Esophagus muscularis mucosa (tissue), 4 donors: ENCODE measurements at regions of chr3 and their contacts with region 1.

Region 1: GRCh38 chr3:112013058-112013783 is 14.5 kb downstream of the TAGLN3 start:
- DNase-seq: peak; percentile 90
- H3K4me3 ChIP-seq: peak overlapping the region in 3 of 4 donors; percentile 8 to 21 (median 10)
- H3K27ac ChIP-seq: no peak overlapping the region
- H3K4me1 ChIP-seq: peaks cover 7 to 21% (median 16%) of the 10 kb centered on the region in 4 donors
- H3K27me3 ChIP-seq: no peaks in the 10 kb centered on the region
- CTCF ChIP-seq: peak; percentile 69 to 79 (median 74)
- EP300 ChIP-seq: no peak
- POLR2A ChIP-seq: no peak

Region 2: DNA sequence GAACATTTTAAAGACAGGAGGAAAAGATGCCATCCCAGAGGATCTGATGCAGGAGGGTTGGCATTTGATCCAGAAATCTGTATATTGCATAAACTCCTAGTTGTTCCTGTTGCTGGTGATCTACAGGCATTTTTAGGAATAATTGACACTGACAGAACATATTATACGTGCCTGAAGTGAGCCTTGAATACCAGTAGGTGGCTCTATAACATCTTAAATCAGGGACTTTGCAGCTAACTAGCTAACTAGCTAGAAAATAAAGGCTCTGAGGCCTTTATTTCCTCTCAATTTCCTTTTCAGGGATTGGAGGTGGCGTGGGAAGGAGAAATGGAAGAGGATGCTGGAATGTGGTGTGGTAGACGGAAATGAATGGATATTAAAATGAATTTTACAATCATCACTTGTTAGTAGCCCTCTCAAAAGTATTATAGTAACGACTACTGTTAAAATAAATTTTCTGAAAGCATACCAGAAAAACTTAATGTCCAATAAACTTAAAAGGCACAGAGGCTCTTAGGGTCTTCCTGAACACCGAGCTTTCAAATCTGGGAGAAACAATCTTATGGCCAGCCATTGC is 344.2 kb before region 1 on chr3:
- intact Hi-C with region 1: loop called (anchors 2 kb)
- DNase-seq: no peak
- H3K4me3 ChIP-seq: no peak overlapping the region
- H3K27ac ChIP-seq: no peak overlapping the region
- H3K4me1 ChIP-seq: peaks cover 4 to 12% (median 8%) of the 10 kb centered on the region in 4 donors
- H3K27me3 ChIP-seq: no peaks in the 10 kb centered on the region
- CTCF ChIP-seq: peak; percentile 79 to 84 (median 82)
- EP300 ChIP-seq: no peak
- POLR2A ChIP-seq: no peak

Region 3: GRCh38 chr3:111874177-111874820 is 138.9 kb before region 1 on chr3:
- intact Hi-C with region 1: no loop called
- DNase-seq: no peak
- H3K4me3 ChIP-seq: no peak overlapping the region
- H3K27ac ChIP-seq: peak overlapping the region in 3 of 4 donors; percentile 15 to 49 (median 22)
- H3K4me1 ChIP-seq: peaks cover 44 to 58% (median 51%) of the 10 kb centered on the region in 4 donors
- H3K27me3 ChIP-seq: no peaks in the 10 kb centered on the region
- CTCF ChIP-seq: no peak
- EP300 ChIP-seq: no peak
- POLR2A ChIP-seq: no peak

Region 4: GRCh38 chr3:112097378-112097777 is 84.2 kb after region 1 on chr3:
- intact Hi-C with region 1: no loop called
- DNase-seq: no peak
- H3K4me3 ChIP-seq: no peak overlapping the region
- H3K27ac ChIP-seq: no peak overlapping the region
- H3K4me1 ChIP-seq: peaks cover 0 to 14% (median 6%) of the 10 kb centered on the region in 4 donors
- H3K27me3 ChIP-seq: no peaks in the 10 kb centered on the region
- CTCF ChIP-seq: no peak
- EP300 ChIP-seq: no peak
- POLR2A ChIP-seq: no peak